Posterior cingulate gyrus (tissue), 11 donors: ENCODE measurements at regions of chr17 and their contacts with region 1.

Region 1: GRCh38 chr17:16589097-16589969 is 20.3 kb upstream of the ZNF287 start:
- DNase-seq: peak; percentile 83 to 99 (median 91)

Region 2: DNA sequence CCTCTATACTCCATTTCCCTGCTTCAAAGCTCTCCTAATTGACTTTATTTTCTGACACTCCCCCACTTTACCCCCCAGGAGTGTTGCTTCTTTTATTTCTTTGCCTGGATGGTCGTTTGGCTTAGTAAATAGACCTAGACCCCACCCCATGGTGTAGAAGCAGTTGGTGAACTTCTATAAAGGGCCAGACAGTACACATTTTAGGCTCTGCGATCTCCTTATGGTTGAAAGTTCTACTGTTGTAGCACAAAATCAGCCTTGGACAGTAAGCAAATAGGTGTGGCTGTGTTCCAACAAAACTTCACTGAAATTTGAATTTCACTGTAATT is 52.2 kb before region 1 on chr17:
- intact Hi-C with region 1: loop called (anchors 2 kb)
- DNase-seq: no peak

Region 3: DNA sequence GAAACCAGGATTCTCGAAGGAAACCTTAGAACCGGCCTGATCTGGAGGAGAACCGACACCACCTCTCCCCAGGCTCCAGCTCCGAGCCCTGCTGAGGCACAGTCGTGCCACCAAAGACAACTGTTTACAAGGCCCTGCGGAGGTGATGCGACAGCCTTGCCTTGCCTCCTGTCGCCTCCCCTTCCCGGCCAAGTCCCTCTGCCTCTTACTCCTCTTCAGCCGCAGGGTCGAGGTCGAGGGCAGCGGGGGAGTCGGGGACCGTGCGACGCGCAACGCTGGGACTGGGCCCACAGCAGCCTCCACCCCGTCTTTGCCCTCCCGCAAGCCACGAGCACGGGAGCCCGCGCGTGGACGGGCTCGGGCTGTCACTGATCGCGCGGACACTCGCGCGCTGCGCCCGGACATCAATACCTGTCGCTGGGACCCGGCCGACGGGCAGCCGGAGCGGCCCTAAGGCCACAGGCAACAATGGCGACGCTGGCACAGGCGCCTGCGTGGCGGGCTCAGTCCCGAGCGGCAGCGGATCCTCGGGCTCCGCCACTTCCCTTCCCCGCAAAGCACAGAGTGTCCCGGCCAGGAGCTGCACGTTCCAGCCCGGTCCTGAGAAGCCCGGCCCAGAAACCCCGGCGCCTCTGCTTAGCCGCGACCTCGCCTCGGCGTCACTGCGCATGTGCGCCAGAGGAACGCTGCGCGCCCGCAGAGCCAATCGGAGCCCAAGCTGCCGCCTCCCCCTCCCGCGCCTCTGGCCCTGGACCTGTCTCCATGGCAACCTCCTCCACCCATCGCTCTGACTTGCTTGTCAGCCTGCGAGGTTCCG is 20.6 kb before region 1 on chr17 and contains the start of gene ZNF287:
- intact Hi-C with region 1: loop called (anchors 1 kb)
- DNase-seq: peak; percentile 92 to 99 (median 96)

Region 4: DNA sequence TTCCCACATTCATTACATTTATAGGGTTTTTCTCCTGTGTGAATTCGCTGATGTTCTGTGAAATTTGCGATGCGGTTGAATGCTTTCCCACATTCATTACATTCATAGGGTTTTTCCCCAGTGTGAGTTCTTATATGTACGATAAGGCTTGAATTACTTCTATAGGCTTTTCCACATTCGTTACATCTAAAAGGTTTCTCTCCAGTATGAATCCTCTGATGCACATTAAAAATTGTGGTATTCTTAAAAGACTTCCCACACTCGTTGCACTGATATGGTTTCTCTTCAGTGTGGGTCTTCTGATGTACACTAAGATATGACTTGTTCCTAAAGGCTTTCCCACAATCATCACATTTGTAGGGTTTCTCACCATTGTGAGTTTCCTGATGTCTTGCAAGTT is 33.9 kb after region 1 on chr17:
- intact Hi-C with region 1: no loop called
- DNase-seq: no peak

Region 5: GRCh38 chr17:16653209-16654041 is 64.1 kb after region 1 on chr17 and contains the start of gene ZNF624:
- intact Hi-C with region 1: loop called (anchors 5 kb)
- DNase-seq: peak; percentile 84 to 98 (median 88)